ENCODE measurements at regions of chr14 and their contacts with region 1.

Region 1: GRCh38 chr14:101335061-101335661 is 226.1 kb upstream of the DIO3 start:
- DNase-seq: peak in 1 of 2 experiments; percentile 49
- H3K4me3 ChIP-seq: no peak overlapping the region
- H3K27ac ChIP-seq: no peak overlapping the region
- H3K4me1 ChIP-seq: peaks cover 30% of the 10 kb centered on the region
- H3K27me3 ChIP-seq: no peaks in the 10 kb centered on the region
- CTCF ChIP-seq: no peak

Region 2: GRCh38 chr14:101256266-101256665 is 78.9 kb before region 1 on chr14:
- CTCF ChIA-PET with region 1: no interaction called
- POLR2A ChIA-PET with region 1: no interaction called
- intact Hi-C with region 1: no loop called
- DNase-seq: no peak
- H3K4me3 ChIP-seq: no peak overlapping the region
- H3K27ac ChIP-seq: no peak overlapping the region
- H3K4me1 ChIP-seq: no peaks in the 10 kb centered on the region
- H3K27me3 ChIP-seq: no peaks in the 10 kb centered on the region
- CTCF ChIP-seq: no peak

Region 3: GRCh38 chr14:101494826-101495225 is 159.7 kb after region 1 on chr14:
- CTCF ChIA-PET with region 1: no interaction called
- POLR2A ChIA-PET with region 1: interaction called, 16 read pairs
- intact Hi-C with region 1: no loop called
- DNase-seq: no peak
- H3K4me3 ChIP-seq: no peak overlapping the region
- H3K27ac ChIP-seq: no peak overlapping the region
- H3K4me1 ChIP-seq: no peaks in the 10 kb centered on the region
- H3K27me3 ChIP-seq: no peaks in the 10 kb centered on the region
- CTCF ChIP-seq: no peak